ENCODE measurements at regions of chr20 and their contacts with region 1.

Region 1: GRCh38 chr20:44115762-44116644 is 71.0 kb downstream of the JPH2 start:
- DNase-seq: no peak
- H3K4me3 ChIP-seq: no peak overlapping the region
- H3K27ac ChIP-seq: no peak overlapping the region
- H3K4me1 ChIP-seq: no peaks in the 10 kb centered on the region
- H3K27me3 ChIP-seq: no peaks in the 10 kb centered on the region
- CTCF ChIP-seq: no peak
- POLR2A ChIP-seq: no peak

Region 2: DNA sequence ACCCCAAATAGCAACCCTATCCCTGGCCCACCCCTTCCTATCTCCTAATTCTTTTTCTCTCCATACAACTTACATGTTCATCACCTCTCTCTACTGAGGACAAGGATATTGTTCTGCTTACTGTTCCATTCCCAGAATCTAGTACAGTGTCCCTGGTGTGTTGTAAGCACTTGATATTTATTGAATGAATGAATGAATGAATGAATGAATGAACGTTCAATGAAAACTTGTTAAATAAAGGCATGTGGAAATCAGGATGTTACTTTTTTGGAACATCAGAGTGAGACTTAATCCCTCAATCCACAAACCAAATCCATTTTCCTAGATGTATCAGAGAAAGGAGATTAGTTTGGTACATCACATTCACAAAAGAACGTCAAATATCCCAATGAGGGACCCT is 77.8 kb after region 1 on chr20:
- intact Hi-C with region 1: loop called (anchors 5 kb)
- DNase-seq: no peak
- H3K4me3 ChIP-seq: no peak overlapping the region
- H3K27ac ChIP-seq: no peak overlapping the region
- H3K4me1 ChIP-seq: peaks cover 5 to 7% of the 10 kb centered on the region in 2 donors
- H3K27me3 ChIP-seq: no peaks in the 10 kb centered on the region
- CTCF ChIP-seq: no peak
- POLR2A ChIP-seq: no peak

Region 3: GRCh38 chr20:44222633-44223368 is 106.8 kb after region 1 on chr20:
- intact Hi-C with region 1: no loop called
- DNase-seq: no peak
- H3K4me3 ChIP-seq: no peak overlapping the region
- H3K27ac ChIP-seq: no peak overlapping the region
- H3K4me1 ChIP-seq: no peaks in the 10 kb centered on the region
- H3K27me3 ChIP-seq: no peaks in the 10 kb centered on the region
- CTCF ChIP-seq: no peak
- POLR2A ChIP-seq: no peak